Posterior cingulate gyrus (tissue), 11 donors: ENCODE measurements at regions of chr2 and their contacts with region 1.

Region 1: GRCh38 chr2:130873700-130874346 is 37.1 kb downstream of the ARHGEF4 start:
- DNase-seq: peak in 8 of 10 donors; percentile 64 to 96 (median 82)

Region 2: DNA sequence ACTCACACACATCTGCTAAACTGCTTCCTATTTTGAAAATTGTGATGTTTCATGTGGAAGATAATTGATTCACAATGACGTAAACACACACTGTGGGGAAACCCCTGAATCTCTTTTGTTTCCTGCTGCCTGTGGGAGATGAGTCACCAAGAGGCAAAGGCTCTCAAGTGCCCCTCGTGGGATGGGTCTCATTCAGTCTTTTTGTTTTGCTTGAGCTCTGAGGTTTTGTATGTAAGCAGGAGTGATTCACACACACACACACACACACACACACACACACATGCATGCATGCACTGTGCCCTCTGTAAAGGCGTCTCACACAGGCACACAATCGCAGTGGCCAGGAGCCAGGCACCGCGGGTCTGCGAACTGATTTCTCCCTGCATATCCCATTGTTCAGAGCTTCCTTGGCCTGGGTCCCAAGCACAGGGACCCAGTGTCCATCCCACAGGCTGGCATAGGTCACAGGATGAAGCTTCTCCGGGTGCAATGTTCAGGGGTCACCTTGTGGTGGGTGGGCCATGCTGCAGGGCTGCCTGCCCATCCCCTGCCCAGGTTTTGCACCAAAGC is 49.2 kb before region 1 on chr2:
- intact Hi-C with region 1: loop called (anchors 10 kb)
- DNase-seq: peak in 7 of 10 donors; percentile 6 to 90 (median 53)

Region 3: DNA sequence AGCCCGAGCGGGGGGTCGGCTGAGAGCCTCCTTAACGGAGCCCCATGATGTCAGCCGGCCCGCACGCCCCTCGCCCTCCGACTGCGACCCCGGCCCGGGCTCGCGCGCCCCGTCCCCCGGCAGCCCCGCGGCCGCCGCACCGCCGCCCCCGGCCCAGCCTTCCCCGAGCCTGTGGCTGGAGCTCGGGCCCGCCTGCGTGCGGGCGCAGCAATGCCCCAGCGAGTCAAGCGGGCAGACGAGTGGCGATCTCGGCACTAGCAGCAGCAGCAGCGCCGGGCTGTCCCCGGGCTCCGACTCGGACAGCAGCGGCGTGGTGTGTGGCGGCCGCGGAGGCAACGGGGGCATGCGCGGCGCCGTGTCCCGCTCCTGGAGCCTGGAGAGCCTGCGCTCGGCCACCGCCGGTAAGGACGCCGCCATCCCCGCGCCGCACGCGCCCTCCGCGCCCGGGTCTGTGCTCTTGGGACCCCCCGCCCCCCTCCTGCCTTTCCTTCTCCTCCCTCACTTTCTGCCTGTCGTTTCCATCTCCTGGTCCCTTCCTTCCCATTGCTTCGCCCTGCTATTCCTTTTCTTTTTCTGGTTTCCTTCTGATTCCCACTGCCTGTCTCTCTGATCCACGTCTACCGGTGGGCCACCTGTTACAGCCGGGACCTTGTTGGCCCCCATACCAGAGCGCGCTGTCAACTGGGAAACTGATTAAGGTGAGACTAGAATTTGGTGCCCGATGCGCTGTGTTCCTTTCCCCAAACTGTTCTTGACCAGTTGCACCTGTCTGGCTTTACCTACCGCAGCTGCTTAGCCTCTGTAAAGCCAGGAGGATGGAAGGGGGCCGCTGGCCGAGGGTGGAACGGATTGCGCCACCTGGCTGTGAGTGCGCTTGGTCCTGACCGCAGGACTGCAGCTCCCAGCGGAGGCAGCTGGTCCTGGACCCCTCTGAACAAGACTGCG is 90.3 kb after region 1 on chr2:
- intact Hi-C with region 1: no loop called
- DNase-seq: peak in 8 of 10 donors; percentile 16 to 92 (median 60)

Region 4: DNA sequence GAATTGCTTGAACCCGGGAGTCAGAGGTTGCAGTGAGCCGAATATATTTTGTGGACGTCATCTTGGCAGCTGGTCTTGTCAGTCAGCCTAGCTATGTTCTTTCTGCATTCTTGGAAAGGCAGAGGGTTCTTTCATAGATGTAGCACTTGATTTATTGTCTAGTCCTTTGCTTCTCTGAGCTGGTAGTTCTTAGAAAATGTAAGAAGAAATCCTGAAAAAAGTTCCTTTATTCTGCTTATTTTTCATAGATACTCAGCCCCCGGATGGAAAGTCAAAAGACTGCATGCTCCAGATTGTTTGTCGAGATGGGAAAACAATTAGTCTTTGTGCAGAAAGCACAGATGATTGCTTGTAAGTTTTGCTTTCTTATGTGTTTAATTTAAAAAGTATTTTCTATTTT is 252.6 kb after region 1 on chr2:
- intact Hi-C with region 1: no loop called
- DNase-seq: no peak